Psoas muscle (tissue), 8 donors: ENCODE measurements at regions of chr15 and their contacts with region 1.

Region 1: DNA sequence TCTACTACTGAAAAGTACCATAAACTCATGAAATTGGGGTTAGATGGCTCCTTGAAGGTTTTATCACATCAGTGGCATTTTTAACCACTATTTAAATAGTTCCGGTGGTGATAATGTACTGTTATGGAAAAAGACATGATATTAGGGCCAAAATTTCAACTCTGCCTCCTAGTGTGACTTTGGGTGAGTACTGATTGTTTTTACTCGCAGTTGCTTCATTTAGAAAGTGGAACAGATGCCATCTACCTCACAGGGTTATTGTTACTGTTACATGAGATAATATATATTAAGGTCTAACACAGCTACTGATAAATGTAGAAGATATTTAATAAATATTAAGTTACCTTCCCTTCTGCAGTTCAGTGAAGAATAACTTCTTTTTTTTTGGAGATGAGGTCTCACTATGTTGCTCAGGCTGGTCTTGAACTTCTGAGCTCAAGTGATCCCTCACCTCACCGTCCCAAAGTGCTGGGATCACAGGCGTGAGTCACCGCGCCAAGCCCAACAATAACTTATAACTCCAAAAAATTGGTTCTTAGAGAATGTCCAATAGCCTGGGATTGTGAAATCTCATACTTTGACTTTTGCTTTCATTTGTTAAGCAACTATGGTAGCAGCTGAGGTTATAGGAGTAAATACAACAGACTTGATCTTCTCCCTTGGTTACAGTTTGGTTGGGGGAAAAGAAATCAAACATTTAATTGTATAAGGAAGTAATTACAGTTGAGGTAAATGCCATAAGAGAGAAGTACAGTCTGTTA is 48.3 kb downstream of the MEF2A start:
- DNase-seq: peak in 1 of 2 donors; percentile 38
- ATAC-seq: peak in 1 of 4 donors; percentile 25
- H3K4me3 ChIP-seq: no peak overlapping the region
- H3K27ac ChIP-seq: peak overlapping the region; percentile 51
- H3K4me1 ChIP-seq: peaks cover 77% of the 10 kb centered on the region
- H3K27me3 ChIP-seq: no peaks in the 10 kb centered on the region
- CTCF ChIP-seq: no peak

Region 2: DNA sequence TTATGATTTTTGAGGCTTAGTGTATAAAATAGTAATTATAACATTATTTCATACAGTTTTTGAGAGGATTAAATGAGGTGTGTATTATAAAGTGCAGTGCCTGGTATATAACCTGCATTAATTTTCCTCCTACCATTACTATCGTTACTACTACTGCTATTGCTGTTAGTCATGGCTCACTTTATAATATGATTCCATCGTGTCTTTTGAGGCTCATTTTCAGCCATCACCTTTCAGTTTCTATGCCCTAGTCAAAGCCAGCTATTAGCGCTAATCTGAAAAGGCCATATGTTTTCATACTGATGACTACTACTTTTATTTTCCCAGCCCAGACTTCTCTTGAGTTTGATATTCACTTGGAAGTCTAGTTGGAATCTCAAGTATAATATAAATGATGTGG is 42.8 kb before region 1 on chr15:
- intact Hi-C with region 1: loop called in 1 of 2 experiments (anchors 5 kb)
- DNase-seq: no peak
- ATAC-seq: no peak
- H3K4me3 ChIP-seq: no peak overlapping the region
- H3K27ac ChIP-seq: peak overlapping the region; percentile 5
- H3K4me1 ChIP-seq: peaks cover 53% of the 10 kb centered on the region
- H3K27me3 ChIP-seq: no peaks in the 10 kb centered on the region
- CTCF ChIP-seq: no peak